ENCODE measurements at regions of chr10 and their contacts with region 1.

Region 1: DNA sequence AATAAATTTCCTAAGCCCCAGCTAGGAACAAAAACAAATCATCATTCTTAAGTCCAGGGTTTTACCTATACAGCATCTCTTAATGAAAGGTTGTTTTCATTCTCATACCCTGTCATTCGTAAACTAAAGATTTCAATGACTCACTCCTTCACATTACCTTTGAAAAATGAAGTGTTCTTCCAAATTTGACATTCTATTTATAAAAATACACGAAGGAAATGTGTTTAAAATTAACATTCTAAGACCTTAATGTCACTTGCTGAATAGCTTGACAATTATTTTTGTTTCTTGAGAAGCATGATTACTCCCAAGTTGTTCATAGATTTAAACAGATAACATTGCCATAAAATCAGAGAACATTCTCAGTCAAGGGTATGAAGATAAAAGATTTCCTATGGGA is 1188.3 kb upstream of the SORCS1 start:
- DNase-seq: no peak
- ATAC-seq: no peak
- H3K4me3 ChIP-seq: no peak overlapping the region
- H3K4me3 Mint-ChIP-seq: no peak overlapping the region
- H3K27ac ChIP-seq: no peak overlapping the region
- H3K27ac Mint-ChIP-seq: no peak overlapping the region
- H3K4me1 ChIP-seq: no peaks in the 10 kb centered on the region
- H3K4me1 Mint-ChIP-seq: no peaks in the 10 kb centered on the region
- H3K27me3 ChIP-seq: no peaks in the 10 kb centered on the region
- H3K27me3 Mint-ChIP-seq: no peaks in the 10 kb centered on the region

Region 2: GRCh38 chr10:107589081-107589480 is 763.7 kb before region 1 on chr10:
- CTCF ChIA-PET with region 1: interaction called in 1 of 2 experiments, 12 read pairs
- POLR2A ChIA-PET with region 1: no interaction called
- DNase-seq: no peak
- ATAC-seq: no peak
- H3K4me3 ChIP-seq: no peak overlapping the region
- H3K4me3 Mint-ChIP-seq: no peak overlapping the region
- H3K27ac ChIP-seq: no peak overlapping the region
- H3K27ac Mint-ChIP-seq: no peak overlapping the region
- H3K4me1 ChIP-seq: no peaks in the 10 kb centered on the region
- H3K4me1 Mint-ChIP-seq: no peaks in the 10 kb centered on the region
- H3K27me3 ChIP-seq: no peaks in the 10 kb centered on the region
- H3K27me3 Mint-ChIP-seq: no peaks in the 10 kb centered on the region

Region 3: GRCh38 chr10:108375691-108376090 is 22.9 kb after region 1 on chr10:
- CTCF ChIA-PET with region 1: no interaction called
- POLR2A ChIA-PET with region 1: no interaction called
- DNase-seq: no peak
- ATAC-seq: no peak
- H3K4me3 ChIP-seq: no peak overlapping the region
- H3K4me3 Mint-ChIP-seq: no peak overlapping the region
- H3K27ac ChIP-seq: no peak overlapping the region
- H3K27ac Mint-ChIP-seq: no peak overlapping the region
- H3K4me1 ChIP-seq: no peaks in the 10 kb centered on the region
- H3K4me1 Mint-ChIP-seq: no peaks in the 10 kb centered on the region
- H3K27me3 ChIP-seq: no peaks in the 10 kb centered on the region
- H3K27me3 Mint-ChIP-seq: no peaks in the 10 kb centered on the region

Region 4: GRCh38 chr10:108385963-108386362 is 33.2 kb after region 1 on chr10:
- CTCF ChIA-PET with region 1: no interaction called
- POLR2A ChIA-PET with region 1: no interaction called
- DNase-seq: no peak
- ATAC-seq: no peak
- H3K4me3 ChIP-seq: no peak overlapping the region
- H3K4me3 Mint-ChIP-seq: no peak overlapping the region
- H3K27ac ChIP-seq: no peak overlapping the region
- H3K27ac Mint-ChIP-seq: no peak overlapping the region
- H3K4me1 ChIP-seq: no peaks in the 10 kb centered on the region
- H3K4me1 Mint-ChIP-seq: no peaks in the 10 kb centered on the region
- H3K27me3 ChIP-seq: no peaks in the 10 kb centered on the region
- H3K27me3 Mint-ChIP-seq: no peaks in the 10 kb centered on the region